Naive thymus-derived CD4-positive, alpha-beta T cell (primary cell): ENCODE measurements at regions of chr18 and their contacts with region 1.

Region 1: DNA sequence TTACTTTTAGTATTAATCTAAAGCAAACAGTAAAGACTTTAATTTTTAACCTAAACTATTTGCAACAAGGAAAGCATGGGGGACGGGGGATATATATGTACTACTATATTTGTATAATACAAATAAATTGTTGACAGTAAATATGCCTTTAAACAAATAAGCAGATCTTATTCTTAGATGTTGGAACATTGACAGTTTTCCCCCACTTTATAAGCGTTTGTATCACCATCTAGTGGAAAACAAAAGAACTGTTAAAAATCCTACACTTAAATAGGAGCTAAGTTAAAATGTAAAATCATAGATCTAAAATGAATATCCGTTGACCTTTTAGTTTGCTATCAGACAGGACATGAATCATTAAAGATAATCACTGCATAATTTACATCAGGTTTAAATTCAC is 50.0 kb downstream of the RBBP8 start:
- DNase-seq: peak in 6 of 9 donors; percentile 8 to 27 (median 21)
- ATAC-seq: peak; percentile 40
- H3K4me3 ChIP-seq: no peak overlapping the region
- H3K4me3 Mint-ChIP-seq: no peak overlapping the region
- H3K27ac ChIP-seq: no peak overlapping the region
- H3K27ac Mint-ChIP-seq: no peak overlapping the region
- H3K4me1 ChIP-seq: no peaks in the 10 kb centered on the region
- H3K4me1 Mint-ChIP-seq: peaks cover 0 to 8% (median 0%) of the 10 kb centered on the region in 7 donors
- H3K27me3 ChIP-seq: no peaks in the 10 kb centered on the region
- H3K27me3 Mint-ChIP-seq: no peaks in the 10 kb centered on the region

Region 2: GRCh38 chr18:22800551-22800951 is 182.6 kb before region 1 on chr18:
- CTCF ChIA-PET with region 1: interaction called, 6 read pairs
- POLR2A ChIA-PET with region 1: no interaction called
- intact Hi-C with region 1: loop called (anchors 1 kb)
- DNase-seq: no peak
- ATAC-seq: no peak
- H3K4me3 ChIP-seq: no peak overlapping the region
- H3K4me3 Mint-ChIP-seq: no peak overlapping the region
- H3K27ac ChIP-seq: no peak overlapping the region
- H3K27ac Mint-ChIP-seq: no peak overlapping the region
- H3K4me1 ChIP-seq: no peaks in the 10 kb centered on the region
- H3K4me1 Mint-ChIP-seq: no peaks in the 10 kb centered on the region
- H3K27me3 ChIP-seq: no peaks in the 10 kb centered on the region
- H3K27me3 Mint-ChIP-seq: peaks cover 0 to 19% (median 0%) of the 10 kb centered on the region in 5 donors

Region 3: GRCh38 chr18:22813648-22814328 is 169.4 kb before region 1 on chr18:
- CTCF ChIA-PET with region 1: interaction called, 7 read pairs
- POLR2A ChIA-PET with region 1: no interaction called
- intact Hi-C with region 1: loop called (anchors 1 kb)
- DNase-seq: peak in 3 of 9 donors; percentile 5 to 27 (median 5)
- ATAC-seq: peak; percentile 50
- H3K4me3 ChIP-seq: no peak overlapping the region
- H3K4me3 Mint-ChIP-seq: no peak overlapping the region
- H3K27ac ChIP-seq: no peak overlapping the region
- H3K27ac Mint-ChIP-seq: no peak overlapping the region
- H3K4me1 ChIP-seq: no peaks in the 10 kb centered on the region
- H3K4me1 Mint-ChIP-seq: no peaks in the 10 kb centered on the region
- H3K27me3 ChIP-seq: no peaks in the 10 kb centered on the region
- H3K27me3 Mint-ChIP-seq: peaks cover 14 to 32% (median 25%) of the 10 kb centered on the region in 5 donors

Region 4: DNA sequence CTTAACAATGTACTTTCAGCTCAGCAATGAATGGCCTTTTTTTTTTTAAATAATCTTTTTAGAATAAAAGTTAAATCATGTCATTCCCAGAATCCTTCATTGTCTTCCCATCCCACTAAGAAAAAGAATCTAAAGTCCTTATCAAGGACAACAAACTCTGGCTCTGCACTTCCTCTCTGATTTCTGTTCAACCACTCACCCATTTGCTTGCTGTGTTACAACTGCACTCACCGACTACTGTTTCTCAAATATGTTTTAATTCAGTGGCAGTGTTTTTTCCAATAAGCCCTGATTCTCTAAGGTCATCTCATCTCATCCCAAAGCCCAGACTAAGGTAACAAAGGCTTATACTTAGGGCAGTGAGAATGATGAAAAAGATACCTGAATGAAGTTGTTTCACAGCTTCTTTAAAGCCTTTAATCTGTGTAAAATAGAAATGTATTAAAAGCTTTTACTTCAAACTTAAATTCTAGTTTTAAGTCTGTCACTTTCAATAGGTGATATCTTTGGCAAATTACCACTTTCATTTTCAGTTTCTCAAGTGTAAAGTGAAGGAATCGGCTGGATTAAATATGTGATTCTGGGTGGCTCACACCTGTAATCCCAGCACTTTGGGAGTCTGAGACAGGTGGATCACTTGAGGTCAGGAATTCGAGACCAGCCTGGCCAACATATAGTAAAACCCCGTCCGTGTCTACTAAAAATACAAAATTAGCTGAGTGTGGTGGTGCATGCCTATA is 37.5 kb after region 1 on chr18:
- CTCF ChIA-PET with region 1: no interaction called
- POLR2A ChIA-PET with region 1: no interaction called
- intact Hi-C with region 1: loop called in 1 of 2 experiments (anchors 1 kb)
- DNase-seq: peak in 1 of 9 donors; percentile 2
- ATAC-seq: no peak
- H3K4me3 ChIP-seq: peak overlapping the region; percentile 43
- H3K4me3 Mint-ChIP-seq: peak overlapping the region in 9 of 10 donors; percentile 1 to 82 (median 65)
- H3K27ac ChIP-seq: peak overlapping the region; percentile 45
- H3K27ac Mint-ChIP-seq: peak overlapping the region in 7 of 9 donors; percentile 39 to 80 (median 53)
- H3K4me1 ChIP-seq: peaks cover 5 to 9% of the 10 kb centered on the region in 2 donors
- H3K4me1 Mint-ChIP-seq: peaks cover 0 to 17% (median 10%) of the 10 kb centered on the region in 7 donors
- H3K27me3 ChIP-seq: no peaks in the 10 kb centered on the region
- H3K27me3 Mint-ChIP-seq: no peaks in the 10 kb centered on the region